ENCODE measurements at regions of chr10 and their contacts with region 1.

Region 1: DNA sequence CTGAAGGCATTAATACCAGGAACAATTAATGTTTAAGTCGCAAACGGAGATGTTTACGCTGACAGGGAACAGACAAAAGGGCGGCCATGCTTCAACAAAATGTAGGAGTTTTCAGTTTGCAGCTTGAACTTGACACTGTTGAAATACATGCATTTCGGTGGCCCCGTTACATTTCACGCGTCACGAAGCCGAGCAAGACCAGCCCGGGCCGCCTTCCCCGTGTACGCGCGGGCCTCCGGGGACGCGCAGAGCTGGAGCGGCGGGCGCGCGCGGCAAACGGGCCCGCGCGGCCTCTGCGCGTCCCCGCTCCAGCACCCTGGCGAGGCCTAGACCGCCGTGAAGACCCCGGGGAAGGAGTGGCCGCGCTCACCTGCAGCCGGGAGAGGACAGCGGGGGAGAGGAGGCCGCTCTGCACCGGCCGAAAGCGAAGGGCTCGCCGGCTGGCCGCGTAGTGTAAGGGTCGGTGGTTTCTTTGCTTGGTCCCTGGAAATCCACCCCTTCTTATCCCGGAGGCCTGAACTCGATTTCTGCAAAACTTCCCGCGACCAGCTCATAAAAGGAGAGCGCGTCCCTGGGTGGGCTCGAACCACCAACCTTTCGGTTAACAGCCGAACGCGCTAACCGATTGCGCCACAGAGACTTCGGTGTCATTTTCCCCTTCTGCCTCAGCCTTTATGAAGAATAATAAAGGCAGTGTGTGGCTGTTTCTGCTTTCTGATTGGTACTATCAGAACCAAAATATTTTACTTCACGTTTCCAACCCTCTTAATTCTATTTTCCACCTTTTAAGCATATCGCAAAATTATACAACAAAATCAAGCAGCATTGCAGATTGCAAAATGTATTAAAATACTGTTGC is 11.4 kb upstream of the EBLN1 start:
- H3K4me3 ChIP-seq: peak overlapping the region; percentile 68
- H3K27ac ChIP-seq: peak overlapping the region; percentile 80
- H3K4me1 ChIP-seq: no peaks in the 10 kb centered on the region
- CTCF ChIP-seq: no peak

Region 2: DNA sequence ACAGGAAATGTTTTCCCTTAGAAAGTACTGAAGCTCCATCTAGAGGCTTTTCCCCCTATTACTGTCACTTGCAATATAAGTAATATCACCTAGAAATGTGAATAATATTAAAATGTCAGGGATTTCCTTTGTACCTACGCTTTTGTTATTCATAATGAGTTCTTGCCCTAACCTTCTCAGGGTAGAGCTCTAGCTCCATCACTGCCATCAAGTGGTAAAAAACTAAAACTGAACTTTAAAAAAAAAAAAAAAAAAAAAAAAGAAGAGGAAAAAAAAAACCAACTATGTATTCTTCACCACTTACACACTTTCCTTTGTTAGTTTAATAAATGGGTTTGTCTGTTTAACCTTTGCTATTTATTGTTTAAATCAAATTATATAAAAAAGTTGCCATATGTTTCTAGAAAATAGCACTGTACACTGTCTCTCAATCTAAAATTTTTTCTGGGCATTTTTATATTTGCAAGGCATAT is 275.6 kb before region 1 on chr10:
- CTCF ChIA-PET with region 1: no interaction called
- POLR2A ChIA-PET with region 1: interaction called, 11 read pairs
- H3K4me3 ChIP-seq: no peak overlapping the region
- H3K27ac ChIP-seq: no peak overlapping the region
- H3K4me1 ChIP-seq: no peaks in the 10 kb centered on the region
- CTCF ChIP-seq: no peak

Region 3: GRCh38 chr10:22003079-22003913 is 225.9 kb before region 1 on chr10 and contains the start of gene DNAJC1:
- CTCF ChIA-PET with region 1: no interaction called
- POLR2A ChIA-PET with region 1: interaction called, 14 read pairs
- H3K4me3 ChIP-seq: peak within 1 kb of the TSS; percentile 80
- H3K27ac ChIP-seq: peak within 1 kb of the TSS; percentile 87
- H3K4me1 ChIP-seq: no peaks in the 10 kb centered on the region
- CTCF ChIP-seq: no peak

Region 4: GRCh38 chr10:22174442-22174841 is 54.7 kb before region 1 on chr10:
- CTCF ChIA-PET with region 1: no interaction called
- POLR2A ChIA-PET with region 1: no interaction called
- H3K4me3 ChIP-seq: no peak overlapping the region
- H3K27ac ChIP-seq: no peak overlapping the region
- H3K4me1 ChIP-seq: no peaks in the 10 kb centered on the region
- CTCF ChIP-seq: no peak

Region 5: GRCh38 chr10:22244001-22244400 is 14.8 kb after region 1 on chr10:
- CTCF ChIA-PET with region 1: interaction called, 12 read pairs
- POLR2A ChIA-PET with region 1: interaction called, 4 read pairs
- H3K4me3 ChIP-seq: no peak overlapping the region
- H3K27ac ChIP-seq: no peak overlapping the region
- H3K4me1 ChIP-seq: peaks cover 12% of the 10 kb centered on the region
- CTCF ChIP-seq: no peak

Region 6: DNA sequence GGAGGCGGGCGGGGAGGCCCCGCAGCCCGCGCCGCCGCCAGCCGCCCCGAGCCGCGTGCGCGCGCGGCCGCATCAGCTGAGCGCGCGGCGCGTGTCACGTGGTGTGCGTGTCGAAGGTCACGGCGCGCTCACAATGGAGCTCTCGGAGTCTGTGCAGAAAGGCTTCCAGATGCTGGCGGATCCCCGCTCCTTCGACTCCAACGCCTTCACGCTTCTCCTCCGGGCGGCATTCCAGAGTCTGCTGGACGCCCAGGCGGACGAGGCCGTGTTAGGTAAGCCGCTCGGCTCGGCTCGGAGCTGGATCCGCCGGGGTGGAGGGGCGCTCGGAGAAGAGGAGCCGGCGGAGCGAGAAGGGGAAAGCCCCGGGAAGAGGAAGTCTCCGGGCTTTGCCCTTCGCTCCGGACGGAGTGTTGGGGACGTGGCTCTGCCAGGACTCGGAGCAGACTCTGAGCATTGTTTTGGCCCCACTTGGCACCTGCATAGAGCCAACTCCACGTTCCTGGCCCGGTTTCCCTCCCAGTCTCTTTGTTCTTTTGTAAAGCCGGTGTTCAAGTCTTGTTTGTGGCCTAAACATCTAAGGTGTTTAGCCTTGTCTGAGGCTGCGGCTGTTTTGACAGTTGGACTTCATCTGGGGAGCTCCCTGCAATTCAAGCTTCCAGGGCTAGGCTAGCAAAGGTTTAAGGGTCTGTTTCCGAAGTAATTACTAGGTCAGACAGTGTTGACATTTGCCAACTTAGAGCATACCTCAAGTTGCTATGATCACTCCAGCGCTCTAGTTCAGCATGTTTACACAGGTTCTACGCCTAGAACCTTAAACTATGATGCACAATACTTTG is 87.3 kb after region 1 on chr10 and contains the start of gene COMMD3:
- CTCF ChIA-PET with region 1: interaction called, 3 read pairs
- POLR2A ChIA-PET with region 1: interaction called, 37 read pairs
- H3K4me3 ChIP-seq: peak within 1 kb of the TSS; percentile 75
- H3K27ac ChIP-seq: peak within 1 kb of the TSS; percentile 96
- H3K4me1 ChIP-seq: peaks cover 14% of the 10 kb centered on the region; the same call in 1 of the 2 replicates
- CTCF ChIP-seq: no peak

Measured in HEK293 (cell line).